PC-3 (cell line): ENCODE measurements at regions of chr10 and their contacts with region 1.

Region 1: GRCh38 chr10:58044072-58044471 is 223.6 kb downstream of the IPMK start:
- DNase-seq: peak; percentile 98
- ATAC-seq: peak; percentile 97
- H3K4me3 ChIP-seq: no peak overlapping the region
- H3K27ac ChIP-seq: peak overlapping the region; percentile 43
- H3K4me1 ChIP-seq: peaks cover 32% of the 10 kb centered on the region
- H3K27me3 ChIP-seq: no peaks in the 10 kb centered on the region
- CTCF ChIP-seq: no peak

Region 2: DNA sequence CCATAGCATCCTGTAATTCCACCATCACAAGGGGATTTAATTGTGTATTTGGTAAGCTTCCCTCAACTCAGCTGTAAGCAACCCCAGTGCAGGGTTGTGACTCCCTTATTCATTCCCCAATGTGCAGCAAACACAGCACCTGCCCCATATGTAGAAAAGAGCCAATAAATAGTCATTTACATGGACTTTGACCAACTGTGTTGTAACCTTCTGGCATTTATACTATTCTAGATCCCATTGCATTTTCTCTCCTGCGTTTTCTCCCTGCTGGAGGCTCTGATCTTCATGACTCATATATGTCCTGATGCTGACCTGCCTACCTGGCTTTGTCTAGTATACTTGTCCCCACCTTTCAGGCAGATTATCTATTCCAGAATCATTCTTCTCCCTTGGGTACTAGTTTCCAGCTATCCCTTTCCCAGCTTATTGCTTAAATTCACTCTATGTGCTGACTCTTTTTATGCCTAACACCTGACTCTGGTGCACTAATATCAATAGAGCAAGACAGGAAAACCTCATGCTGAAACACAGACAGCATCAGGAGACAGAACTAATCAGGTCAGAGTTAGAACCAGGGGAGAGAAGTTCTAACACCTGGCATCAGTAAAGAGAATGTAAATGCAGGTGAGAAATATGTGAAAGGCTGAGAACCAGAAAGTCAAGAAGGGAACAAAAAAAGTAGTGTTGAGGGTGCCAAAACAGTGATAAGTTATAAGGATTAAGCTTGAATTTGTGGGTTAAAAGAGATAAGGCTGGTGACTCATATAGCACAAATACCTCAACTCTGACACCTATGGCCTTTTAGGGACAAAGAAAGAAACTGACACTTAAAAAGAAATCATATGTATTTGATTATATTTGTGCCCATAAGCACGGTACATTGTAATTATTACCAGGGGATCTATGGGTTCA is 179.1 kb before region 1 on chr10:
- CTCF ChIA-PET with region 1: no interaction called
- POLR2A ChIA-PET with region 1: no interaction called
- intact Hi-C with region 1: loop called (anchors 1 kb)
- DNase-seq: peak; percentile 77
- ATAC-seq: peak; percentile 48
- H3K4me3 ChIP-seq: no peak overlapping the region
- H3K27ac ChIP-seq: 0 out of 2 replicates have a peak overlapping the region, but pooled peaks have one; percentile 4
- H3K4me1 ChIP-seq: peaks cover 37% of the 10 kb centered on the region
- H3K27me3 ChIP-seq: no peaks in the 10 kb centered on the region
- CTCF ChIP-seq: no peak

Region 3: DNA sequence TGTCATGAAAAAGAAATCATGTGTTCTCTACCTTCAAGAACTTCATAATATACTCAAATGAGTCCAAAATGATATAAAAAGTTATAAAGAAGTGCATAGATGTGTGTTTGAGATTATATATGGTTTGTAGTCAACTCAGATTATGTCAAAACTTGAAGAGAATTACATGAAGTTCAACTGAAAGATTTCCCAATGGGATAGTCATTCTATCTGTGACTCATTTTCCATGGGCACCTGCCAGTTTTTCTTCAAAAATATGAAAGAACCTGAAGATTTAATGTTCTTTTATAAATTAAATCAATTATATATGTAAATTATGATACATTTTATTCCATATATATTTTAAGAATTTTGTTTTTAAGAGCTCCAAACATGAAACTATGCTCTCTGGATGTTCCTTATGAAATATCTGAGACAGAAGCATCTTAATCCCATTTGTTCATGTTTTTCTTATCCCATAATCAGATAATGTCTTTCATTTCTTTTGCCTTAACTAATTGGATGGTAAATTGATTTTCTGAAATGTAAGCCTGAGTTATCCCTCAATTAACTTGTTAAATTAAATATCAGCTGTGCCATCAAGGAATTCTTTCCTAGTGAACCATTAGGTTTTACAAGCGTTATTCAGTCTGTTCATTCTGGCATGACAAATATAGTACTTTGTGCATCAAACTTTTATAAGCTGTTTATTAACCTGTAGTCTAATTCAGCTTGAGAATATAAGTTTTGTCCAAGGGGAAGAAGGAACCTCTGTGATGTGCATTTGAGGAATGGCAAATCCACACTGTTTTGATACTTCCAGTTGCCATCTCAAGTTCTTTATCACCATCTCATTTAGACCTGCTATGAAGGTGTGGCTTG is 163.4 kb before region 1 on chr10:
- CTCF ChIA-PET with region 1: no interaction called
- POLR2A ChIA-PET with region 1: no interaction called
- intact Hi-C with region 1: loop called (anchors 1 kb)
- DNase-seq: peak; percentile 73
- ATAC-seq: peak; percentile 66
- H3K4me3 ChIP-seq: no peak overlapping the region
- H3K27ac ChIP-seq: no peak overlapping the region
- H3K4me1 ChIP-seq: peaks cover 19% of the 10 kb centered on the region
- H3K27me3 ChIP-seq: no peaks in the 10 kb centered on the region
- CTCF ChIP-seq: no peak

Region 4: GRCh38 chr10:57917019-57917418 is 127.1 kb before region 1 on chr10:
- CTCF ChIA-PET with region 1: no interaction called
- POLR2A ChIA-PET with region 1: no interaction called
- intact Hi-C with region 1: loop called (anchors 1 kb)
- DNase-seq: no peak
- ATAC-seq: no peak
- H3K4me3 ChIP-seq: no peak overlapping the region
- H3K27ac ChIP-seq: no peak overlapping the region
- H3K4me1 ChIP-seq: peaks cover 25% of the 10 kb centered on the region
- H3K27me3 ChIP-seq: no peaks in the 10 kb centered on the region
- CTCF ChIP-seq: no peak

Region 5: GRCh38 chr10:57964351-57964750 is 79.7 kb before region 1 on chr10:
- CTCF ChIA-PET with region 1: no interaction called
- POLR2A ChIA-PET with region 1: no interaction called
- intact Hi-C with region 1: loop called (anchors 5 kb)
- DNase-seq: peak; percentile 94
- ATAC-seq: peak; percentile 96
- H3K4me3 ChIP-seq: no peak overlapping the region
- H3K27ac ChIP-seq: 0 out of 2 replicates have a peak overlapping the region, but pooled peaks have one; percentile 1
- H3K4me1 ChIP-seq: peaks cover 19% of the 10 kb centered on the region
- H3K27me3 ChIP-seq: no peaks in the 10 kb centered on the region
- CTCF ChIP-seq: no peak

Region 6: GRCh38 chr10:58023341-58024073 is 20.6 kb before region 1 on chr10:
- CTCF ChIA-PET with region 1: no interaction called
- POLR2A ChIA-PET with region 1: no interaction called
- intact Hi-C with region 1: loop called (anchors 1 kb)
- DNase-seq: peak; percentile 97
- ATAC-seq: peak; percentile 92
- H3K4me3 ChIP-seq: no peak overlapping the region
- H3K27ac ChIP-seq: peak overlapping the region; percentile 82
- H3K4me1 ChIP-seq: peaks cover 25% of the 10 kb centered on the region
- H3K27me3 ChIP-seq: no peaks in the 10 kb centered on the region
- CTCF ChIP-seq: no peak